Mammary epithelial cell (primary cell): ENCODE measurements at regions of chr1 and their contacts with region 1.

Region 1: DNA sequence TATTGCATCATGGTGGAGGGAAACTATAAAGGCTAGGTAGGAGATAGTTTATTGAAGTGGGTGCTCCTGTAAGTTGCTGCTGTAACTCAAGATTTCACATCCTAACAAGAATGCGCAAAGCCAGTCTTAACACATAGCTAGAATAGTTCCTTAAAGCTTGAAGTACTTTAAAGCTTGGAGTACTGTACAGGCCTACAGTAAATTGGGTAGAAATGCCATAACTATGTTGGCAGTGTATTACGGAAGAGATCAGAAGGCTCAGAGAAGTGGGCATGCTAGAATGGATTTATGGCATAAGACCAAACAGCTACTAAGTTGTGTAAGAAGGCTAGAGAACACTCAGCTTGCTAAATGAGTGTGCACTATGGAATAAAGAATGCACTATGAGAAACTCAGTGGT is 44.5 kb downstream of the DMRTA2 start:
- DNase-seq: no peak
- H3K4me3 ChIP-seq: no peak overlapping the region
- H3K27ac ChIP-seq: no peak overlapping the region
- H3K4me1 ChIP-seq: no peaks in the 10 kb centered on the region
- H3K27me3 ChIP-seq: peaks cover 2% of the 10 kb centered on the region
- CTCF ChIP-seq: no peak

Region 2: GRCh38 chr1:50704126-50704525 is 325.4 kb after region 1 on chr1:
- CTCF ChIA-PET with region 1: no interaction called
- dilution Hi-C with region 1: no loop called
- in situ Hi-C with region 1: loop called in 1 of 2 experiments (anchors 25 kb)
- intact Hi-C with region 1: no loop called
- DNase-seq: peak; percentile 26
- H3K4me3 ChIP-seq: no peak overlapping the region
- H3K27ac ChIP-seq: no peak overlapping the region
- H3K4me1 ChIP-seq: peaks cover 15% of the 10 kb centered on the region
- H3K27me3 ChIP-seq: no peaks in the 10 kb centered on the region
- CTCF ChIP-seq: peak; percentile 74 to 80